Heart right ventricle (tissue), 16 donors: ENCODE measurements at regions of chr4 and their contacts with region 1.

Region 1: GRCh38 chr4:186144142-186144955 is 39.8 kb downstream of the FAM149A start:
- DNase-seq: peak; percentile 46 to 73
- ATAC-seq: peak; percentile 72 to 88 (median 77)
- H3K4me3 ChIP-seq: peak overlapping the region; percentile 44 to 74 (median 63)
- H3K27ac ChIP-seq: peak overlapping the region; percentile 13 to 83 (median 65)
- H3K4me1 ChIP-seq: peaks cover 0 to 19% (median 13%) of the 10 kb centered on the region in 9 donors
- H3K27me3 ChIP-seq: peaks cover 0 to 46% (median 0%) of the 10 kb centered on the region in 7 donors
- CTCF ChIP-seq: peak in 4 of 9 donors; percentile 12 to 17 (median 17)

Region 2: DNA sequence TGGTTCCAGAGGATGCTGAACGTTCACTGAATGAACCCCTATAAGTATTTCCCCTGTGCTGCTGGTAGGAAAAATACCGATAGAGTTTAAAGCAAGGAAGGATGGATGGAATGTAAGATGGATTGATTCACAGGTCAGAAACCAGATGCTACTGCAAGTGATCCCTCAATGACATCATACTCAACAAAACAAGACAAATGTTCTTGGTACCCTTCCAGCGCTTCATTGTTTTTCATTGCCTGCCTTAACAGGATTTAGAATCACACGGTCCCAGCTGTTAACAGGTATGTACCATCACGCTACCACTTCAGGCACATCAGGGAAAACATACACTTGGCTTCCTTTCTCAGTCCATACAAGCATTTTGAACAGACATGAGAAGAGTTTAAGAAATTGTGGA is 193.5 kb before region 1 on chr4:
- intact Hi-C with region 1: no loop called
- DNase-seq: no peak
- ATAC-seq: no peak
- H3K4me3 ChIP-seq: no peak overlapping the region
- H3K27ac ChIP-seq: no peak overlapping the region
- H3K4me1 ChIP-seq: no peaks in the 10 kb centered on the region
- H3K27me3 ChIP-seq: no peaks in the 10 kb centered on the region
- CTCF ChIP-seq: no peak

Region 3: GRCh38 chr4:186067757-186068385 is 76.5 kb before region 1 on chr4:
- intact Hi-C with region 1: loop called in 7 of 10 experiments (anchors 5 to 10 kb)
- DNase-seq: peak; percentile 27 to 60
- ATAC-seq: peak; percentile 87 to 94 (median 90)
- H3K4me3 ChIP-seq: peak overlapping the region; percentile 36 to 68 (median 55)
- H3K27ac ChIP-seq: peak overlapping the region in 6 of 10 donors; percentile 17 to 72 (median 66)
- H3K4me1 ChIP-seq: peaks cover 0 to 21% (median 12%) of the 10 kb centered on the region in 9 donors
- H3K27me3 ChIP-seq: no peaks in the 10 kb centered on the region
- CTCF ChIP-seq: peak; percentile 12 to 70 (median 58)

Region 4: GRCh38 chr4:186172546-186172945 is 28.2 kb after region 1 on chr4:
- intact Hi-C with region 1: no loop called
- DNase-seq: no peak
- ATAC-seq: no peak
- H3K4me3 ChIP-seq: no peak overlapping the region
- H3K27ac ChIP-seq: no peak overlapping the region
- H3K4me1 ChIP-seq: no peaks in the 10 kb centered on the region
- H3K27me3 ChIP-seq: no peaks in the 10 kb centered on the region
- CTCF ChIP-seq: no peak